OCI-LY7 (cell line): ENCODE measurements at regions of chr2 and their contacts with region 1.

Region 1: DNA sequence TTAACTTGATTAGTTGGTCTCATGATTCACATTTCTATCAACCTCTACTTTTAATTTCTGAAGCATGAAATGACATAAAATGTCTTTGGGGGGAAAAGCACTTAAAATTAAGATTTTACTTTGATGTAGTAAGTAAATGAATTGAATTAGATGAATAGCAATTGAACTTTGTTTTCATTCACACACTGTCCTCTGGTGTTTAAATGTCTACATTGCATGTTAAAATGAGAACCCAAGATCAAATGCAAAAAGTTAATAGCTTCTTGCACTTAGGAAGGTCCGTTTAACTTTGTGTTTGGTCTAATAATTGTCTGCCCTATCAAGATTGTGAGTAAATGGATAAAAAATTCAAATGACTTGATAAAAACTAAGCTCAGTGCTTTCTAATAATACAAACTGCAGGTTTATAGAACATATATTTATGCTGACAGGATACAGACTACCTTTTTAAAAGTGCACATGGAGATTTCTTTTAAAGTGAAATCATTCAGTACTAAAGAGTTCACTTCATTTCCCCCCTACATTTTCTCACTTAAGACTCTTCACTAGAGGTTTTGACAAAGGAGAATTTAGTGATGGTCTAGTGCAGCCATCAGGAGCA is 156.2 kb upstream of the NABP1 start:
- DNase-seq: peak; percentile 25
- H3K4me3 ChIP-seq: no peak overlapping the region
- H3K27ac ChIP-seq: no peak overlapping the region
- H3K4me1 ChIP-seq: no peaks in the 10 kb centered on the region
- CTCF ChIP-seq: peak; percentile 85

Region 2: DNA sequence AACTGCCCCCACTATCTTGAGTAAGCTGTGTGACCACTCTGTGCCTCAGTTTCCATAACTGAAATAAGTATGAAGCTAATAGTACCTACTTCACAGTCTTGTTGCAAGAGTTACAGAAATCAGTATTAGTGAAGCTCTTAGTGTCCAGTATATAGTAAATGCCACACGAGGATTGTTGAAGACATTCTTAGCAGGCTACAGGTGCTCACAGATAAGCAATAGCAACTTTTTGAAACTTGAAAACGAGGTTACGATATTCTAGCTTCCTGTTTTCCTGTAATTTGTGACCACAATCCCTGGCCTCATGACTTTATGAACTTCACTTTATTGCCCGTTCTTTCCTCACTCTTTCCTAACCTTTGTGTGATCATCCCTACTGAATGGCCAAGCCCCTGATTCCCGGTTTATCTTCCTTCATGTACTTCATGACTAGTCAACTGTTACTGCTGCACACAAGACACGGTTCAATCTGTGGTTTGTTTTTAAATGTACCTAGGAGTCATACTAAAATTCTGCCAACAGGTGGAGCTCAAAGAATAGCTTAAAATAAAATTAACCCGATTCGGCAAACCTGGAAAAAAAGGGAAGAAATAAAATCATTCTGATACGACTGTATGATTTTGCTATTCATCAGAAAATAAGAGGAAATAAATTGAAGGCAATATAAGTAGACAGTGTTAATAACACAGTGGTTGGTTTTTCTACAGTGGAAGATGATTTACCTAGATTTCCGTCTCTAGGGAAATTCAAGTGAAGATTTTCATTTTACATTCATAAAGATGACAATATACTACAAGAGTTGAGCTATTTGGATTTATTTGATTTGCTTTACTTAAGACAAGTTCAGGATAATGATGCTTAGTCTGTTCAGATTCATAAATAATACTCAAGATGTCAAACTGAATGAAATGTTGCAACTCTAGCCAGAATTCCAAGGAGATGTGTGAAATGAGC is 469.6 kb before region 1 on chr2:
- CTCF ChIA-PET with region 1: no interaction called
- POLR2A ChIA-PET with region 1: no interaction called
- intact Hi-C with region 1: loop called (anchors 5 kb)
- DNase-seq: peak; percentile 61
- H3K4me3 ChIP-seq: no peak overlapping the region
- H3K27ac ChIP-seq: no peak overlapping the region
- H3K4me1 ChIP-seq: peaks cover 7% of the 10 kb centered on the region
- CTCF ChIP-seq: peak; percentile 90

Region 3: DNA sequence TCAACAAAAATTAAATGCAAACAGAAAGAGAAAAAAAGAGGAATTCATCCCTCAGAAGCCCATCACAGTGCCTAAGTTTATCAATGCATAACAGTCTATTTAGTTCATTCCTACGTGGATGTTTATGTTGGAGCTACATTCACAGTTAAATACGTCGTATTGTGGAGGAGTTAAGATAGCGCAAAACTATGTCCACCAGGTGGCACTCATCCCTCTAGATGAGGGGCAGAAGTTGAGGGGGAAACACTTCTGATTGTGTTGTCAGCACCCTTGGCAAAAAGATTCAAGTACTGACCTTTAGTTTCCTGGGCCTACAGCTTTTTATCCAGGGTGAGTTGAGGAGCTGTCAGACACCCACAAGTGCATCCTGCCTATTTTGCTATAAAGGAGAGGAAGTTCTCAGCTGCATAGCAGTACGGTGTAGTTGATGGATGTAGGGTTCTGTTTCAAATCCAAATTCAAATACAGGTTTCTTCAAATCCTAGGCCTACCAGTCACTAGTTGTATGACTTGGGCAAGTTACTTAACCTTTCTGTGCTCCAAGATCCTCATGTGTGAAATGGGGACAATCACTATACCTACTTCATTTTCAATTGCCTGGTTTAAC is 303.3 kb before region 1 on chr2:
- CTCF ChIA-PET with region 1: no interaction called
- POLR2A ChIA-PET with region 1: no interaction called
- intact Hi-C with region 1: loop called (anchors 5 kb)
- DNase-seq: peak; percentile 57
- H3K4me3 ChIP-seq: no peak overlapping the region
- H3K27ac ChIP-seq: no peak overlapping the region
- H3K4me1 ChIP-seq: no peaks in the 10 kb centered on the region
- CTCF ChIP-seq: peak; percentile 89